ENCODE measurements at regions of chr12 and their contacts with region 1.

Region 1: GRCh38 chr12:25855716-25856115 is 102.8 kb upstream of the RASSF8 start:
- DNase-seq: no peak
- ATAC-seq: no peak
- H3K4me3 ChIP-seq: no peak overlapping the region
- H3K4me3 Mint-ChIP-seq: no peak overlapping the region
- H3K27ac ChIP-seq: no peak overlapping the region
- H3K27ac Mint-ChIP-seq: no peak overlapping the region
- H3K4me1 ChIP-seq: no peaks in the 10 kb centered on the region
- H3K4me1 Mint-ChIP-seq: peaks cover 18% of the 10 kb centered on the region
- H3K27me3 ChIP-seq: no peaks in the 10 kb centered on the region
- H3K27me3 Mint-ChIP-seq: no peaks in the 10 kb centered on the region
- CTCF ChIP-seq: no peak

Region 2: GRCh38 chr12:25590011-25590721 is 265.6 kb before region 1 on chr12:
- CTCF ChIA-PET with region 1: no interaction called
- POLR2A ChIA-PET with region 1: no interaction called
- intact Hi-C with region 1: loop called in 1 of 2 experiments (anchors 1 kb)
- DNase-seq: peak in 8 of 14 experiments; percentile 3 to 50 (median 18)
- ATAC-seq: peak; percentile 94
- H3K4me3 ChIP-seq: no peak overlapping the region
- H3K4me3 Mint-ChIP-seq: peak overlapping the region; percentile 12
- H3K27ac ChIP-seq: peak overlapping the region in 1 of 2 donors; percentile 15
- H3K27ac Mint-ChIP-seq: peak overlapping the region; percentile 89
- H3K4me1 ChIP-seq: peaks cover 14% of the 10 kb centered on the region
- H3K4me1 Mint-ChIP-seq: peaks cover 57% of the 10 kb centered on the region
- H3K27me3 ChIP-seq: no peaks in the 10 kb centered on the region
- H3K27me3 Mint-ChIP-seq: no peaks in the 10 kb centered on the region
- CTCF ChIP-seq: no peak

Region 3: GRCh38 chr12:25839455-25839854 is 16.3 kb before region 1 on chr12:
- CTCF ChIA-PET with region 1: no interaction called
- POLR2A ChIA-PET with region 1: no interaction called
- intact Hi-C with region 1: loop called in 1 of 2 experiments (anchors 1 kb)
- DNase-seq: no peak
- ATAC-seq: no peak
- H3K4me3 ChIP-seq: no peak overlapping the region
- H3K4me3 Mint-ChIP-seq: no peak overlapping the region
- H3K27ac ChIP-seq: no peak overlapping the region
- H3K27ac Mint-ChIP-seq: no peak overlapping the region
- H3K4me1 ChIP-seq: no peaks in the 10 kb centered on the region
- H3K4me1 Mint-ChIP-seq: peaks cover 9% of the 10 kb centered on the region
- H3K27me3 ChIP-seq: no peaks in the 10 kb centered on the region
- H3K27me3 Mint-ChIP-seq: no peaks in the 10 kb centered on the region
- CTCF ChIP-seq: no peak

Region 4: DNA sequence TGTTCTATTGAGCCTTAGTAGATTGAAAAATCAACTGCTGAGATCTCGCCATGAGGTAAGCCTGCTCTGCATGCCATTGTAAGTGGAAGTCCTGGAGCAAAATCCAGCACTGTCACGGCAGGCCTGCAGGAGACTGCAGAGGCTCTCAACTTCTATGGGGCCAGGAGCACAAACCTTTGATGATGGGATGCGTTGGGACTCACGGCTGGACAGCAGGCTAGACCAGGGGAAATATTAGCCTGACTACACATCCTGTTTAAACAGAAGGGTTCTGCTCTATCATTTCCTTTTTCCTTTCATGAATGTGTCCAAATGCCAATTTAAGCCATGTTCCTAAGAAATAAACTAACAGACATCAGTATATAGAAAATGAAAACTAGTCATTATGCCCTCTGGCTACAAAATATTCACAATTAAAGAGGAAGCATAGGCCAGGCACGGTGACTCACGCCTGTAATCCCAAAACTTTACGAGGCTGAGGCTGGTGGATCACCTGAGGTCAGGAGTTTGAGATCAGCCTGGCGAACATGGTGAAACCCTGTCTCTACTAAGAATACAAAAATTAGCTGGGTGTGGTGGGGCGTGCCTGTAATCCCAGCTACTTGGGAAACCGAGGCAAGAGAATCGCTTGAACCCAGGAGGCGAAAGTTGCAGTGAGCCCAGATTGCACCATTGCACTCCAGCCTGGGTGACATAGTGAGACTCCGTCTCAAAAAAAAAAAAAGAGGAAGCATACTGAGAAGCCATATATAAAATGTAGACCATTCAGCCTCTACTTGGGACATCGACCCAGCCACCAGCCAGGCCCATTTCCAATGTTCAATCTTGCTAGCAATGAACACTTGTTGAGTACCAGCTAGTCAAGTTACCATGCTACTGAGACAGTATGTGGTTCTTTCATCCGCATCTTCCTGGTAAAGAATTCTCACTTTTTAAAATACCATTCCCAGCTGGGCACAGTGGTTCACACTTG is 69.1 kb after region 1 on chr12:
- CTCF ChIA-PET with region 1: no interaction called
- POLR2A ChIA-PET with region 1: no interaction called
- intact Hi-C with region 1: no loop called
- DNase-seq: no peak
- ATAC-seq: no peak
- H3K4me3 ChIP-seq: no peak overlapping the region
- H3K4me3 Mint-ChIP-seq: no peak overlapping the region
- H3K27ac ChIP-seq: no peak overlapping the region
- H3K27ac Mint-ChIP-seq: no peak overlapping the region
- H3K4me1 ChIP-seq: no peaks in the 10 kb centered on the region
- H3K4me1 Mint-ChIP-seq: no peaks in the 10 kb centered on the region
- H3K27me3 ChIP-seq: no peaks in the 10 kb centered on the region
- H3K27me3 Mint-ChIP-seq: no peaks in the 10 kb centered on the region
- CTCF ChIP-seq: no peak

Region 5: DNA sequence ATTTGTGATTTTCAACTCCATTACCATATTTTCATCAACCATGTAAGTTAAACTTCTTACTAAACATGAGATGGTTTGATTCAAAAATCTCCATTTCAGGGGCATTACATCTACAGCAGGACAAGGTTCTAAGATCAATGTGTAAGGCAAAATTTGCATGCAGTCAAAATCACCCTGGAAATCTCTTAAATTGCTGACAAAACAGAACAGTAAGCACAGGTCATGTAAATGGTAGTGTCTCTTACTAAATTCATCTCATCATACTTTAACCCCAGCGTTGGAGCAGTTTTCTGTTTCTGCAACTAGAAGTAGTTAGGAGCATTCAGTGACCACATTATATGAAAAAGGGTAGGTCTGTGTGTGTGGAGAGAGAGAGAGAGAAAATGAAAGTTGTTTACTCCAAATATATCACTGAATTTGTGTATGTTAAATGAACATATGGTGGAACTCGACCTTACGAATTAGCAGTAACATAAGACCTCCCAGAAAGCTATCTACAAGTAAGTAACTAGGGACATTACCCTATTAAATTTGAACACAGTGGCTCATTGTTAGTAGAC is 567.2 kb after region 1 on chr12:
- CTCF ChIA-PET with region 1: no interaction called
- POLR2A ChIA-PET with region 1: no interaction called
- intact Hi-C with region 1: no loop called
- DNase-seq: no peak
- ATAC-seq: no peak
- H3K4me3 ChIP-seq: no peak overlapping the region
- H3K4me3 Mint-ChIP-seq: no peak overlapping the region
- H3K27ac ChIP-seq: no peak overlapping the region
- H3K27ac Mint-ChIP-seq: no peak overlapping the region
- H3K4me1 ChIP-seq: no peaks in the 10 kb centered on the region
- H3K4me1 Mint-ChIP-seq: no peaks in the 10 kb centered on the region
- H3K27me3 ChIP-seq: no peaks in the 10 kb centered on the region
- H3K27me3 Mint-ChIP-seq: no peaks in the 10 kb centered on the region
- CTCF ChIP-seq: no peak